ENCODE measurements at regions of chr4 and their contacts with region 1.

Region 1: GRCh38 chr4:41281038-41281634 is 24.4 kb downstream of the UCHL1 start:
- DNase-seq: peak in 2 of 10 donors; percentile 47 to 54
- H3K4me3 ChIP-seq: peak overlapping the region in 1 of 59 donors; percentile 20
- H3K27ac ChIP-seq: no peak overlapping the region
- H3K27me3 ChIP-seq: no peaks in the 10 kb centered on the region
- CTCF ChIP-seq: peak; percentile 81 to 99 (median 93)

Region 2: DNA sequence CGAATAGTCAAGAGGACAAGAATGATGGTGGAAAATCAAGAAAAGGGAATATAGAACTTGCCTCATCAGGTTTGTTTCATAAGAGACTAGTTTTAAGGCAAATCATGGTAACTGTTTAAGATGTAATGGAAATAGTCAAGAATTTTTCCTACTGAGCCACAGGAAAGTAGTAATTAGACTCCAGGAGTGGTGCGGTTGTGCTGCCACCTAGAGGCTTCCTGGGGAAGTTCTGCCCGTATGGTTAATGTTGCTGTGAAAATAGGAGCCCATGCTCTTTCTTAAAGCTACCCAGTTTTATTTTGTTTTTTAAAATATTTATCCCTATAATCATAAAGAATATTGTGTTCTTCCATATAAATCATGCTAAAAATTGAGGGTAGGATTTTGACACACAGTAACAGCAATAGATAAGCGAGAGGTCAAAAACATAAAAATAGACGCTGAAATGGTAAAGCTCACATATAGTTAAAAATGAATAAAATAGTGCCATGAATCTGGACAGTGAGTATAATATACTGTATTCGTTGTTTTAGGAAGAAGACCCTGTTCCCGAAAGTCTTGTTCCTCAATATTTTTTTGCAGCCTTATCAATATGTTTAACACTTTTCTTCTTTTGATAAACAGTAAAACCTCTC is 380.4 kb after region 1 on chr4:
- intact Hi-C with region 1: loop called (anchors 1 to 5 kb)
- DNase-seq: peak; percentile 54 to 85 (median 65)
- H3K4me3 ChIP-seq: no peak overlapping the region
- H3K27ac ChIP-seq: peak overlapping the region in 15 of 59 donors; percentile 5 to 62 (median 26)
- H3K27me3 ChIP-seq: no peaks in the 10 kb centered on the region
- CTCF ChIP-seq: peak; percentile 87 to 99 (median 95)

Region 3: DNA sequence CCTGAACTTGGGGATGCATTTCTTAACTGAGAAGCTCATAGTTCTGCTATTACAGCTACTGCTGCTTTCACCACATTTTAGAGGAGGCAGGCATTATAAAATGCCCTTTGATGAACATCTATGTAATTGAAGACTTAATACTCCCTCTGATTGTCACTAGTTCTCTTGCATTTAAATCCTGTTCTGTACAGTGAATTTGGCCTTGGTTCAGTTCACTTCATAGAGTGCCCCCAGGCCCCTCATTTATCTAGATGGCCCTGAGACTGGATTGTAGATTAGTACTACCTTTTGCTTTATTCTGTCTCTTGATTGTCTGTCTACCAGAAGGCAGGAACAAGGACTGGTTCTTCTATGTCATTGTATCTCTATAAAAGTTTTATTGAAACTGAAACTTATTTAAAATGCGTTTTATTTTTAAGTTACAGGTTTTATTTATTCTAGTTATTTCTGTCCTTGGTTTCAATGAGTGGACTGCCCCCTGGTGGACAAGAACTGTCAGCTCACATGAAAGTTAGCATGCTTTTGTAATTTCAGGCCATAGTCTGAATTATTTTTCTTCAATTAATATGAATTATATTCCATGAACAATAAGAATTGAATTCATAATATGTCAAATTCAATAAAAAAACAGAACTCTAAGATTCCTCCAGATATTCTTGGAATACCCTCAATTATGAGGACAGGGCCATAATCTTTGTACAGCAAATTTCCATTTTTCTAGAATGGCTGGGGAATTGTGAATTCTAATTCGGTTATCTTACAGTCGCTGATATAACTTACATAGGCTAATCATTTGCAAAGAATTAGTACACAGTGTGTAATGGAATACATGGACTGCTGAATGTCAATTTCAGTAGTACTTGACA is 606.9 kb after region 1 on chr4:
- intact Hi-C with region 1: loop called (anchors 2 to 5 kb)
- DNase-seq: peak in 5 of 10 donors; percentile 39 to 72 (median 54)
- H3K4me3 ChIP-seq: no peak overlapping the region
- H3K27ac ChIP-seq: no peak overlapping the region
- H3K27me3 ChIP-seq: peaks cover 0 to 23% (median 6%) of the 10 kb centered on the region in 45 donors
- CTCF ChIP-seq: peak; percentile 83 to 98 (median 93)

Measured in dorsolateral prefrontal cortex (tissue), 120 donors.